WTC11 (cell line): ENCODE measurements at regions of chr3 and their contacts with region 1.

Region 1: GRCh38 chr3:101216710-101217465 is 103.5 kb downstream of the IMPG2 start:
- DNase-seq: no peak
- ATAC-seq: no peak
- H3K4me3 Mint-ChIP-seq: no peak overlapping the region
- H3K27ac Mint-ChIP-seq: no peak overlapping the region
- H3K4me1 Mint-ChIP-seq: no peaks in the 10 kb centered on the region
- H3K27me3 Mint-ChIP-seq: peaks cover 3% of the 10 kb centered on the region; the same call in 1 of the 2 replicates
- CTCF ChIP-seq: no peak

Region 2: DNA sequence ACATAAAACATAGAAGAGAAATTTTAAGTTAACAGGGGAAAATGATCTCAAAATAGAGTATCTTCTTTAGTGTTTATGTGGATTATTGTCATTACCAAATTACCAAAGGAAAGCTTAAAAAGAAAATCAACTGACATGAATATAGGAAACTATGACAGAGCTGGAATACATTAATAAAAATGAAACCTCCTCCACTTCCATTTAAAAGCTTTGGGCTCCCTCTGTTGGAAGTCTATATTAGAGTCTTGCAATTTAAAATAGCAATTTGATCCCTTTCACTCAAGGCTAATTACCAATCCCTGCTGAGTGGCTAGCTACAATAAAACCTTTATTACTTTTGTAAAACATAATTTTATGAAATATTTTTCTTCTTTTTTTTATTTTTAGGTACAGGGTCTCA is 164.9 kb after region 1 on chr3:
- CTCF ChIA-PET with region 1: interaction called, 20 read pairs
- POLR2A ChIA-PET with region 1: no interaction called
- DNase-seq: no peak
- ATAC-seq: peak; percentile 13; the same call in 1 of the 2 replicates
- H3K4me3 Mint-ChIP-seq: no peak overlapping the region
- H3K27ac Mint-ChIP-seq: no peak overlapping the region
- H3K4me1 Mint-ChIP-seq: peaks cover 9% of the 10 kb centered on the region
- H3K27me3 Mint-ChIP-seq: no peaks in the 10 kb centered on the region
- CTCF ChIP-seq: 0 out of 2 replicates have a peak, but pooled peaks have one; percentile 17